Activated CD4-positive, alpha-beta memory T cell treated with anti-CD3 and anti-CD28 coated beads for 36 hours (primary cell): ENCODE measurements at regions of chr6 and their contacts with region 1.

Region 1: GRCh38 chr6:158060455-158061360 is 79.0 kb downstream of the SYNJ2 start:
- DNase-seq: no peak
- H3K4me3 Mint-ChIP-seq: no peak overlapping the region
- H3K27ac Mint-ChIP-seq: no peak overlapping the region
- H3K4me1 Mint-ChIP-seq: peaks cover 31% of the 10 kb centered on the region
- H3K27me3 Mint-ChIP-seq: no peaks in the 10 kb centered on the region

Region 2: GRCh38 chr6:157219201-157220200 is 841.2 kb before region 1 on chr6:
- CTCF ChIA-PET with region 1: no interaction called
- POLR2A ChIA-PET with region 1: no interaction called
- intact Hi-C with region 1: no loop called
- DNase-seq: no peak
- H3K4me3 Mint-ChIP-seq: no peak overlapping the region
- H3K27ac Mint-ChIP-seq: no peak overlapping the region
- H3K4me1 Mint-ChIP-seq: peaks cover 30% of the 10 kb centered on the region
- H3K27me3 Mint-ChIP-seq: no peaks in the 10 kb centered on the region

Region 3: DNA sequence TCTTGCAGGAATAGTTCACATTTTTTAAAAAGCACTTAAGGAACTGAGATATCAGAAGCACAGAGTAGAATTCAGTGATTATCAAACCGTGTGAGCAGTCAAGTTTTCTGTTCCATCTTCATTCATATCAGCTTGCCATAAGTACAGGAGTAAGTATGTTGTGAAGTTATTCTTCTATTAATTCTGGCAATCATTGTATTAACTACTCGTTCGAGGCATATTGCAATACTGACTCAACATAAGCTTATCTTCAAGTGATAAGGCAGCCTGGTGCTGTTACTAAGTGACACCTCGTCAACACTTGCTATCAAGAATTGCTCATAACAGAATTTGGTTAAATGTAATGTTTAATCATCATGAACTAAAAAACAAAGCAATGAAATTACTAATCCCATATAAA is 313.3 kb before region 1 on chr6:
- CTCF ChIA-PET with region 1: no interaction called
- POLR2A ChIA-PET with region 1: no interaction called
- intact Hi-C with region 1: no loop called
- DNase-seq: no peak
- H3K4me3 Mint-ChIP-seq: no peak overlapping the region
- H3K27ac Mint-ChIP-seq: no peak overlapping the region
- H3K4me1 Mint-ChIP-seq: peaks cover 33% of the 10 kb centered on the region
- H3K27me3 Mint-ChIP-seq: peaks cover 3% of the 10 kb centered on the region

Region 4: GRCh38 chr6:157885211-157885788 is 175.4 kb before region 1 on chr6:
- CTCF ChIA-PET with region 1: no interaction called
- POLR2A ChIA-PET with region 1: no interaction called
- intact Hi-C with region 1: loop called (anchors 5 kb)
- DNase-seq: peak; percentile 75
- H3K4me3 Mint-ChIP-seq: no peak overlapping the region
- H3K27ac Mint-ChIP-seq: peak overlapping the region; percentile 94
- H3K4me1 Mint-ChIP-seq: peaks cover 68% of the 10 kb centered on the region
- H3K27me3 Mint-ChIP-seq: no peaks in the 10 kb centered on the region

Region 5: DNA sequence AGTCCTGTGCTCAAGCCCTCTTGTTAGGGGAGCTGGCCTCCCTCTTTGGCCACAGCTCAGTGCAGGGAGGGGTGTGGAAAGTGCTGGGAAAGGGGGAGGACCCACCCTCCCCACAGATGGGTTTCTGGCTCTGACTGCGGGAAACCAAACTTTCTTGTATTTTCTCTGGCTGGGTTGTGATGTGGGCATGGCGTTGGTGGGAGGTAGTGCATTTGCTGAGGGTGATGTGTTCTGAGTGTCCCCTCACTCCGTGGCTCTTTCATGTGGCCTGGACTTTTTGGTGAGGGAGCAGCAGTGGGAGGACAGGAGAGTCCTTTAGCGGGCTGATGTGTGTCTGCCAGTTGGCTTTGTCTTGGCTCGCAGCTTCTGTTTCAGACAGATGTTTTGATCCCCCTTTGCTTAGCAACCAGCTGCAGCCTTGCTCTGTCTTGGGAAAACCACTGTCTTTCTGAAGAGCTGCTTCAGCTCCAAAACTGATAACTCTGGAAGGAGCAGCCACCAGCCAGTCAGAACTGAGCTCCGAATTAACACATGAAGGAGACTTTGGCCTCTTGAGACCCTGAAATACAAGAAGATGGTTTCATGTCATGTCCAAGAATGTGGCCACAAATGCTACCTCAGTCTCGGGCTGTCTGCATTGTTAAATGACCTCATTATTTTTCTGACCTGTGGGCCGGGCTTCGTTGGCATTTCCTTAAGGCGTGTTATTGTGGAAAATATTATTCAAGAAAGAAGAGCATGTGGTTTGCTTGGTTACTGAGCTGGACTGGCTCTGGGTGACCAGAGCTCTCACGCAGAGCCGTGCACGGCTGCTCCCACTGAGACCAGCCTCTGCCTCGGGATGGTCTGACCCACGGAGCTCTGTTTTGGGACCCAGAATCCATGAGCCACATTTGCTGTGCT is 57.5 kb before region 1 on chr6:
- CTCF ChIA-PET with region 1: no interaction called
- POLR2A ChIA-PET with region 1: no interaction called
- intact Hi-C with region 1: loop called (anchors 5 kb)
- DNase-seq: peak; percentile 80
- H3K4me3 Mint-ChIP-seq: no peak overlapping the region
- H3K27ac Mint-ChIP-seq: peak overlapping the region; percentile 44
- H3K4me1 Mint-ChIP-seq: peaks cover 44% of the 10 kb centered on the region
- H3K27me3 Mint-ChIP-seq: no peaks in the 10 kb centered on the region

Region 6: GRCh38 chr6:158072083-158072721 is 11.5 kb after region 1 on chr6:
- CTCF ChIA-PET with region 1: interaction called, 18 read pairs
- POLR2A ChIA-PET with region 1: no interaction called
- intact Hi-C with region 1: no loop called
- DNase-seq: peak; percentile 80
- H3K4me3 Mint-ChIP-seq: no peak overlapping the region
- H3K27ac Mint-ChIP-seq: peak overlapping the region; percentile 64
- H3K4me1 Mint-ChIP-seq: peaks cover 23% of the 10 kb centered on the region
- H3K27me3 Mint-ChIP-seq: no peaks in the 10 kb centered on the region